Activated T-helper 1 cell treated with anti-CD3 and anti-CD28 coated beads, Interleukin-12 subunit alpha, Interleukin-12 subunit beta, Interleukin-2, Interleukin-4 antibody, amounts not matched to agents 30 ng/mL and 10 ng/mL and 1 ng/mL, durations not matched to agents 14 hours and 24 hours and 36 hours (primary cell): ENCODE measurements at regions of chr9 and their contacts with region 1.

Region 1: DNA sequence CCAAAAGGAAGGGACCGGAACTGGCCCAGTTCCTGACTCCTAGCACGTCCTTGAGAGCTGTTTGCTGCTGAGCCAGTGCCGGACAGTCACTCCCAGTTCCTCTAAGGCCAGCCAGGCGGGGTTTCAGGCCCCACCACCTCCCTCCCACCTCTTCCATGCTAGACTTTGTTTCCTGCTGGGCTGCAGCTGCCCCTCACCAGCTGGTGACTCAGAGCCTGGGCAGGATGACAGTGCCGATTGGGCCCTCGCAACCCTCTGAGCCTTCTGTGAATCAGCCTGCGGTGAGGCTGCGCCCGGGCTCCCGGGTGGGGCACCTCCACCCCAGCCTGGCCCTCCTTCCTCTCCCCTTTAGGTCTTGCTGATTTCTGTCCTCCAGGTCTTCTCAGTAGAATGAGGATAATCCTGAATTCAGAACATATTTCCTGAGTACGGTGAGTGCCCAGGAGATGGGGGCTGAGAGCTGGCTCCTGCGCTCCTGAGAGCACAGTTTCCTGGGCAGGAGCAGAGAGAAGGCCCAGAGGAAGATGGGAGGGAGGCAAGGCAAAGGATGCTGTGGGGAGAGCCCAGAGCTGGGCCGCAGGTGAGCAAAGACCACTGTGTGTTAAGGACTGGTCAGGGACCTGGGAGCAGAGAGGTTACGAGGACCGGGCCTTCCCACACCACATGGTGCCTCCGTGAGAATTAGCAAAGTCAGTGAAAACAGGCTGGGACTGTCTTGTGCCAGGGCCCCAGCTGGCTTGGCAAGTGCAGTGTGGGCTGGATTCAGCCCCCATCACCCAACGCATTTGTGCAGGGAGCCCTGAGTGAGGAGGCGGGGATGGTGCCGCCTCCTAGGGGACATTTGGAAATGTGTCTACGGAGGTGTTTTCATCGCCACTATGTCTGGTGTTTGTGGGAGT is 32.9 kb upstream of the STXBP1 start:
- DNase-seq: peak; percentile 66
- H3K4me3 Mint-ChIP-seq: peak overlapping the region; percentile 78
- H3K27ac Mint-ChIP-seq: peak overlapping the region; percentile 76
- H3K4me1 Mint-ChIP-seq: peaks cover 44% of the 10 kb centered on the region
- H3K27me3 Mint-ChIP-seq: no peaks in the 10 kb centered on the region

Region 2: DNA sequence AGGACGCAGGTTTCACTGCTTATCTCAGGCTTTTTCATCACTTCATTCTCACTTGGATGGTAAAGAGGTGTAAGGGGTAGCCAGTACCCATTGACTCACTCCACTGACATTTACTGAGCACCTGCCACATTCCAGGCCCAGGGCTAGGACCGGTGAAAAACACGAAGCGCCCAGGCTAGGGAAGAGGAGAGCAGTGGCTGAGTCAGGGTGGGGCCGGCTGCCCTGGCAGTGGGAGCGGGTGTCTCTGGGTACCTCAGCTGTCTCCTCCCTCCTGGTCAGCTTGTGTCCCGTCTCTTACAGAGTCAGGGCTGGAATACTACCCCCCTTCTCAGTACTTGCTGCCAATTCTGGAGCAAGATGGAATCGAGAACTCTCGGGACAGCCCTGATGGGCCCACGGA is 105.7 kb before region 1 on chr9:
- intact Hi-C with region 1: no loop called
- DNase-seq: no peak
- H3K4me3 Mint-ChIP-seq: no peak overlapping the region
- H3K27ac Mint-ChIP-seq: no peak overlapping the region
- H3K4me1 Mint-ChIP-seq: no peaks in the 10 kb centered on the region
- H3K27me3 Mint-ChIP-seq: no peaks in the 10 kb centered on the region

Region 3: DNA sequence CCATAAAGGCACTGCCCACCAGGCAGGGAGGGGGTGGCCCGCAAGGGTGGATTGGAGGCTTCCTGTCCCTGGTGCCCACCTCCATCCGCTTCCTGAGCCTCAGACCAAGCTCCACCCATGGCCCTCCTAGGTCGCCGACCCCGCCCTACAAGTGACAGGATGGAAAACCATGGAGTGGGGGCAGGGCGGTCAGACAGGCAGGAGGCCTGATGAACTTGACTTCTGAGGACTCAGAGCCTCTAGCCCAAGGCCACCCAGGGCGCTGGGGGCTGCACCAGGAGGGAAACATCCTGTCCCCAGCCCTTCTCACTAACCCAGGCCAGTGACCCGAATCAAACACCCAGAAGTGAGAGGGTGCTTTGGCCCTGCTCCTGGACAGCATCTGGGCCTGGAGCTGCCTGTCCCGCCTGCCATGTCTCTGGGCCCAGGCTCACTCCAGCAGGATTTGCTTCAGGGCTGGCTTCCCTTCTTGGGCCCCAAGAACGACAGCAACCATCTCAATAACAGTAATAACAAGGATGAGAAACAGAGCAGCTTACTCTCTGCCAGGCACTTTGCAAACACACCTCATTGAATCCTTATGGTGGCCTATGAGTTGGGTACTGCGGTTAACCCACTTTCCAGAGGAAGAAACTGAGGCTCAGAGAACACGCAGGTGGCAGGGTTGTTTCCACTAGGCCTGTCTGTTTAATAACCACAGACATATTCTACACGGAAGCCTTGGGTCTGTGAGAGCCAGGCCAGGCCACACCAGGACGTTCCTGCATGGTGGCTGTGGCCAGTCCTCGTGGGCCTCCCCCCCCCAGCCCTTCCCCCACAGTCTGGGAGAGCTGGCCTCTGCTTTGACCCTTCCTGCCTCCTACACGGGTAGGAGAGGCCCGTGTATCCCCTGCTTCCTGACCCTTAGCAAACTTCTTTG is 324.6 kb after region 1 on chr9:
- intact Hi-C with region 1: loop called (anchors 10 kb)
- DNase-seq: peak; percentile 83
- H3K4me3 Mint-ChIP-seq: peak overlapping the region; percentile 93
- H3K27ac Mint-ChIP-seq: peak overlapping the region; percentile 100
- H3K4me1 Mint-ChIP-seq: peaks cover 47% of the 10 kb centered on the region
- H3K27me3 Mint-ChIP-seq: no peaks in the 10 kb centered on the region